ENCODE measurements at regions of chr2 and their contacts with region 1.

Region 1: GRCh38 chr2:191245046-191245868 is at the start of gene MYO1B:
- DNase-seq: peak; percentile 81
- ATAC-seq: peak; percentile 78
- H3K4me3 ChIP-seq: peak within 1 kb of the TSS; percentile 30 to 76 (median 72)
- H3K4me3 Mint-ChIP-seq: peak within 1 kb of the TSS; percentile 88
- H3K27ac ChIP-seq: no peak within 1 kb of the TSS
- H3K27ac Mint-ChIP-seq: peak within 1 kb of the TSS; percentile 22
- H3K4me1 ChIP-seq: peaks cover 4 to 18% of the 10 kb centered on the region in 2 donors
- H3K4me1 Mint-ChIP-seq: peaks cover 19% of the 10 kb centered on the region
- H3K27me3 ChIP-seq: no peaks in the 10 kb centered on the region
- H3K27me3 Mint-ChIP-seq: peaks cover 7% of the 10 kb centered on the region
- CTCF ChIP-seq: peak; percentile 45
- total RNA-seq, gene MYO1B: 0.67 and 1.2 TPM in 2 replicates

Region 2: DNA sequence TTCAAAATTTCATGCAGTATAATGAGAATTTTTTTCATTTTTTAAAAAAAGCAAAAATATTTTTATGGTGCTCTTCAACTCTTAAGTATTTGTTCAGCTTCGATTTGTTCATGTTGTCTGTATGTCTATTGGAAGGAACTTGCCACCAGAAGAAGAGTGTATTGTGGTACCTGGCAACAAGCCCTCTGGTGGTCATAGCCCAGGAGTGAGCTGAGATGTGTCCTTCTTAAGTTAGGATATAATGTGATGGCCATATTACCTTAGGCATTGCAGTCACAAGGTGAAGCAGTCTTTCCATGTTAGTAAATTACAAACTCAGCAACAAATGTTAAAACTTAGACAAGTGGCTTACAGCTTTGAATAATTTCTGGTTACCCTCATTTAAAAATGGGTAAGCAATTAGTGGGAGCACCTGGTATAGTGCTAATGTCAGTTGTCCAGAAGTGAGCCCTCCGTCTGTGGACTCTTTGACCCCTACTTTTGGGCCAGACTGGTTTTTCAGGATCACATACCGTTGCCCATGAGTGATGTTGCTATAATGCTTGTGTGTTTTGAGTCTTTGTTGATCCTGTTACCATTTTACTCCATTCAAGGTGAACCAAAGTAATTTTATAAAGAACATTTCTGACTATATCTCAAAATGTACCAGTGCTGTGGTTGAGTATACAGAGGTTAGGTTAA is 57.3 kb after region 1 on chr2:
- CTCF ChIA-PET with region 1: interaction called, 5 read pairs
- POLR2A ChIA-PET with region 1: no interaction called
- intact Hi-C with region 1: loop called (anchors 5 kb)
- DNase-seq: peak; percentile 57
- ATAC-seq: peak; percentile 53
- H3K4me3 ChIP-seq: no peak overlapping the region
- H3K4me3 Mint-ChIP-seq: no peak overlapping the region
- H3K27ac ChIP-seq: no peak overlapping the region
- H3K27ac Mint-ChIP-seq: no peak overlapping the region
- H3K4me1 ChIP-seq: peaks cover 4 to 8% of the 10 kb centered on the region in 2 donors
- H3K4me1 Mint-ChIP-seq: peaks cover 10% of the 10 kb centered on the region
- H3K27me3 ChIP-seq: no peaks in the 10 kb centered on the region
- H3K27me3 Mint-ChIP-seq: peaks cover 7% of the 10 kb centered on the region
- CTCF ChIP-seq: peak; percentile 47

Region 3: DNA sequence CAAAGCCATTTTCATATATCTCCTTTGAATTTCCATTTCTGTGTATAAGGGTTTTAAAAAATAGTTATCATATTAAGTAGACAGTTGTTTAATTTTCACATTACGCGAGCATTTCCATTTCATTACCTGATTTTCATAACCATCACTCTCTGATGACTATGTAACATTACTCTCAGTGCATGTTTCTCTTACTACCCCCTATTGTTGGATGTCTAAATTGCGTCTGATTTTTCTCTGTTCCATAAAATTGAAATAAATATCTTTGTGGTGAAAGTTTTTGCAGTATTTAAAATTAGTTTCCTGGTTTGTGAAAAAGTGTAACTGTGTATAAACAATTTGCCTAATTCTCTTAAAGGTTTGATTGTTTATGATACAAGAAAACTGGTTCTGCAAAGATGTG is 123.8 kb after region 1 on chr2:
- CTCF ChIA-PET with region 1: no interaction called
- POLR2A ChIA-PET with region 1: no interaction called
- intact Hi-C with region 1: loop called (anchors 10 kb)
- DNase-seq: peak; percentile 14
- ATAC-seq: no peak
- H3K4me3 ChIP-seq: no peak overlapping the region
- H3K4me3 Mint-ChIP-seq: no peak overlapping the region
- H3K27ac ChIP-seq: no peak overlapping the region
- H3K27ac Mint-ChIP-seq: no peak overlapping the region
- H3K4me1 ChIP-seq: no peaks in the 10 kb centered on the region
- H3K4me1 Mint-ChIP-seq: no peaks in the 10 kb centered on the region
- H3K27me3 ChIP-seq: no peaks in the 10 kb centered on the region
- H3K27me3 Mint-ChIP-seq: no peaks in the 10 kb centered on the region
- CTCF ChIP-seq: no peak

Region 4: GRCh38 chr2:191521608-191522208 is 276.5 kb after region 1 on chr2:
- CTCF ChIA-PET with region 1: interaction called, 3 read pairs
- POLR2A ChIA-PET with region 1: no interaction called
- intact Hi-C with region 1: loop called (anchors 1 kb)
- DNase-seq: peak; percentile 37
- ATAC-seq: peak; percentile 33
- H3K4me3 ChIP-seq: no peak overlapping the region
- H3K4me3 Mint-ChIP-seq: no peak overlapping the region
- H3K27ac ChIP-seq: no peak overlapping the region
- H3K27ac Mint-ChIP-seq: no peak overlapping the region
- H3K4me1 ChIP-seq: no peaks in the 10 kb centered on the region
- H3K4me1 Mint-ChIP-seq: no peaks in the 10 kb centered on the region
- H3K27me3 ChIP-seq: peaks cover 0 to 4% (median 0%) of the 10 kb centered on the region in 4 experiments
- H3K27me3 Mint-ChIP-seq: peaks cover 4% of the 10 kb centered on the region
- CTCF ChIP-seq: peak; percentile 92

Region 5: GRCh38 chr2:191601060-191601459 is 355.8 kb after region 1 on chr2:
- CTCF ChIA-PET with region 1: no interaction called
- POLR2A ChIA-PET with region 1: no interaction called
- intact Hi-C with region 1: no loop called
- DNase-seq: no peak
- ATAC-seq: no peak
- H3K4me3 ChIP-seq: no peak overlapping the region
- H3K4me3 Mint-ChIP-seq: no peak overlapping the region
- H3K27ac ChIP-seq: no peak overlapping the region
- H3K27ac Mint-ChIP-seq: no peak overlapping the region
- H3K4me1 ChIP-seq: no peaks in the 10 kb centered on the region
- H3K4me1 Mint-ChIP-seq: no peaks in the 10 kb centered on the region
- H3K27me3 ChIP-seq: no peaks in the 10 kb centered on the region
- H3K27me3 Mint-ChIP-seq: peaks cover 13% of the 10 kb centered on the region
- CTCF ChIP-seq: no peak

Measured in B cell (primary cell).